CD4-positive, alpha-beta memory T cell (primary cell): ENCODE measurements at regions of chr1 and their contacts with region 1.

Region 1: GRCh38 chr1:70264839-70265238 is 43.7 kb downstream of the SRSF11 start:
- DNase-seq: no peak
- H3K4me3 ChIP-seq: no peak overlapping the region
- H3K4me3 Mint-ChIP-seq: no peak overlapping the region
- H3K27ac ChIP-seq: no peak overlapping the region
- H3K27ac Mint-ChIP-seq: peak overlapping the region in 5 of 7 donors; percentile 14 to 79 (median 67)
- H3K4me1 ChIP-seq: no peaks in the 10 kb centered on the region
- H3K4me1 Mint-ChIP-seq: peaks cover 0 to 3% (median 0%) of the 10 kb centered on the region in 4 donors
- H3K27me3 ChIP-seq: no peaks in the 10 kb centered on the region
- H3K27me3 Mint-ChIP-seq: no peaks in the 10 kb centered on the region

Region 2: DNA sequence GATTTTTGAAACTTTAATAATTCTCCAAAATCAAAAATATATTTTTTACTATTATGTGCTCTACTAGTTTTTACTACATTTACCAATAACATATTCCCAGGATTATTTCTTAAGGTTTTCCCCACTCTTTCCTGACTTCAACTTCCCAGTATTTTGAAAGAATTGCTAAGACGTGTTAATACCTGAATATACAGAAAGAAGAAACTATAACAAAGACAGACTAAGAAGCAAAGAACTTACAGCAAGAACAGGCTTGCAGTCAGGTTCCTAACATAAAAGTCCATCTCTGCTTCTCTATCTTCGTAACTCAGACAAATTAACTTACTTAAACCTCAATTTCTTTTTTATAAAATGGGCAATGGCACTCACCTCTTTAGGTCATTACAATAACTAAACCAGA is 19.5 kb after region 1 on chr1:
- CTCF ChIA-PET with region 1: no interaction called
- POLR2A ChIA-PET with region 1: no interaction called
- intact Hi-C with region 1: loop called (anchors 2 kb)
- DNase-seq: no peak
- H3K4me3 ChIP-seq: no peak overlapping the region
- H3K4me3 Mint-ChIP-seq: no peak overlapping the region
- H3K27ac ChIP-seq: no peak overlapping the region
- H3K27ac Mint-ChIP-seq: peak overlapping the region in 1 of 7 donors; percentile 54
- H3K4me1 ChIP-seq: no peaks in the 10 kb centered on the region
- H3K4me1 Mint-ChIP-seq: peaks cover 0 to 10% (median 4%) of the 10 kb centered on the region in 4 donors
- H3K27me3 ChIP-seq: no peaks in the 10 kb centered on the region
- H3K27me3 Mint-ChIP-seq: no peaks in the 10 kb centered on the region